Spleen (tissue), 13 donors: ENCODE measurements at regions of chr12 and their contacts with region 1.

Region 1: DNA sequence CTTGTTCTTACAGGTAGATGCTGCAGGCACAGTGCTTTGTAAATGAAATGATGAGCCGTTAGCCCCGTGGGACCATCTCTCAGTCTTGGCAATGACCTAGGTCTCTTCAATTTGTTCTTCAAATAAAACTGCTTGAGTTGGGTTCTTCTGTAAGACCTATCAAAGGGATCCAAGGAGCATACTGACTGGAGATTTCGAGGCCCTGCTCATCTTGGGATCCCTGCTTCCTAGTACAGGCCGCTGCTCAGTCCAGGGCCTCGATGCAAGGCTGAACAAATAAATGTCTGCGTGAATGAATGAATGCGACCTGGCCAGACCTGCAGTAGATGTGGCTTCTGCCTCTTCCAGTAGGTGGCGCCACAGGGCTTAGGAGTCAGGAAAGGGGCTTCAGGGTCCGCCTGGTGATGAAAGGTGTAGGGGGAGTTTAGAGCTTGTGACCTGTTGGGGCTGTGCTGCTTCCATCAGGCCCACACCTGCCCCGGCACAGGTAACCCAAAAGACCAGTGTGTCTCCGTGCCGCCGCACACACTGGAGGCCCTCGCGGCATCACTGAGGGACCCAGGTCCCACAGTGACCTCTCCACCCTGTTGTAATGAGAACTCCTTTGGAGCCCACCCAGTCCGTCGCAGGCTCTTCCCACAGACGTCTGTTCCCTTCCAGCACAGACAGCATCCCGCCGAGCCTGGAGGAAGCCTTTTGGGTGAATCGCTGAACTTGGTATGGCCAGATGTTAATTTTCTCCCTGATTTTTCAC is 4.4 kb downstream of the CACNA1C start:
- DNase-seq: no peak
- H3K4me3 ChIP-seq: no peak overlapping the region
- H3K27ac ChIP-seq: no peak overlapping the region
- H3K4me1 ChIP-seq: peaks cover 2 to 40% (median 10%) of the 10 kb centered on the region in 6 donors
- H3K27me3 ChIP-seq: peaks cover 4 to 51% (median 19%) of the 10 kb centered on the region in 7 donors
- CTCF ChIP-seq: peak; percentile 37 to 76 (median 61)
- POLR2A ChIP-seq: no peak

Region 2: GRCh38 chr12:2284857-2285256 is 227.6 kb after region 1 on chr12:
- intact Hi-C with region 1: loop called (anchors 10 kb)
- DNase-seq: peak; percentile 86
- H3K4me3 ChIP-seq: no peak overlapping the region
- H3K27ac ChIP-seq: peak overlapping the region in 5 of 8 donors; percentile 25 to 47 (median 34)
- H3K4me1 ChIP-seq: peaks cover 7 to 75% (median 38%) of the 10 kb centered on the region in 6 donors
- H3K27me3 ChIP-seq: peaks cover 0 to 17% (median 0%) of the 10 kb centered on the region in 7 donors
- CTCF ChIP-seq: peak; percentile 18 to 73 (median 61)
- POLR2A ChIP-seq: no peak

Region 3: DNA sequence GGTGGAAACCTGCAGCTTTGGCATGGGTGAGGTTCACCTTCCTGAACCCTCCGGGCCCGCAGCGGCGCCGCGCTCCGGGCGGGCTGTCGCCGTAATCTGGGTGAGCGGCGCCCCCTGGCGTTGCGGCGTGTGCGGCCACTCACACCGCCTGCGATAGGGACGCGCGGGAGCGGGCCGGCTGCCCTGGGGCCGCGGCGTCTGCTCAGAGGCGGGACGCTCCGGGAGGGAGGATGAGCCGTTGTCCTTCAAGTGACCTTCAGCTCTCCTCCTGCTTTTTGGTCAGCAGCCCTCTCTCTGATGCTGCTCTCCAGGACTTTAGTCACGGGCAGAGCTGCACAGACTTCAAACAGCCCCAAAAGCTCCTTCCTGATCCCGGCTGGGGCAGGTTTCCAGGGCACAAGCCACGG is 525.9 kb after region 1 on chr12:
- intact Hi-C with region 1: loop called (anchors 10 kb)
- DNase-seq: peak; percentile 88
- H3K4me3 ChIP-seq: peak overlapping the region in 2 of 8 donors; percentile 4 to 45
- H3K27ac ChIP-seq: peak overlapping the region in 1 of 8 donors; percentile 38
- H3K4me1 ChIP-seq: peaks cover 0 to 18% (median 11%) of the 10 kb centered on the region in 6 donors
- H3K27me3 ChIP-seq: peaks cover 0 to 50% (median 0%) of the 10 kb centered on the region in 7 donors
- CTCF ChIP-seq: peak; percentile 48 to 93 (median 81)
- POLR2A ChIP-seq: no peak